Activated B cell treated with CpG ODN at 0.5 μM for 24 hours (primary cell): ENCODE measurements at regions of chr11 and their contacts with region 1.

Region 1: GRCh38 chr11:115892016-115892415 is 387.8 kb upstream of the CADM1 start:
- DNase-seq: no peak
- ATAC-seq: no peak
- H3K4me3 Mint-ChIP-seq: no peak overlapping the region
- H3K27ac Mint-ChIP-seq: no peak overlapping the region
- H3K4me1 Mint-ChIP-seq: no peaks in the 10 kb centered on the region
- H3K27me3 Mint-ChIP-seq: no peaks in the 10 kb centered on the region
- CTCF ChIP-seq: no peak

Region 2: GRCh38 chr11:114563077-114563476 is 1328.9 kb before region 1 on chr11:
- CTCF ChIA-PET with region 1: no interaction called
- POLR2A ChIA-PET with region 1: no interaction called
- intact Hi-C with region 1: no loop called
- DNase-seq: no peak
- ATAC-seq: no peak
- H3K4me3 Mint-ChIP-seq: no peak overlapping the region
- H3K27ac Mint-ChIP-seq: no peak overlapping the region
- H3K4me1 Mint-ChIP-seq: no peaks in the 10 kb centered on the region
- H3K27me3 Mint-ChIP-seq: peaks cover 1% of the 10 kb centered on the region
- CTCF ChIP-seq: no peak

Region 3: DNA sequence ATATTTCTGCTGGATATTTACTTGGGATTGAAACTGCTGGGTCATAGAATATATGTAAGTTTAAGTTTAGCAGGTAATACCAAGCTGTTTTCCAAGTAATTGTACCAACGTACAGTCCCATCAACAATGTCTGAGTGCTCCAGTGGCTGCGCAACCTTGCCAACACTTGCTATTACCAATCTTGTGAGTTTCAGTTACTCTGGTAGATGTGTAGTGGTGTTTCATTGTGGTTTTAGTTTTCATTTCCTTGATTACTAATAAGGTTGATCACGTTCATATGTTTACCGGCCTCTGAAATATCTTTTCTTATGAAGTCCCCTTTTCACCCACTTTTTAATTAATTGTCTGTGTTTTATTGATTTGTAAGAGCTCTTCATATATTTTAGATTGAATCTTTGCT is 17.2 kb before region 1 on chr11:
- CTCF ChIA-PET with region 1: no interaction called
- POLR2A ChIA-PET with region 1: no interaction called
- intact Hi-C with region 1: loop called (anchors 1 kb)
- DNase-seq: no peak
- ATAC-seq: no peak
- H3K4me3 Mint-ChIP-seq: no peak overlapping the region
- H3K27ac Mint-ChIP-seq: no peak overlapping the region
- H3K4me1 Mint-ChIP-seq: peaks cover 30% of the 10 kb centered on the region
- H3K27me3 Mint-ChIP-seq: no peaks in the 10 kb centered on the region
- CTCF ChIP-seq: no peak